WTC11 (cell line): ENCODE measurements at regions of chr19 and their contacts with region 1.

Region 1: GRCh38 chr19:45059278-45059965 is 16.9 kb downstream of the ZNF296 start:
- DNase-seq: peak; percentile 96
- ATAC-seq: peak; percentile 88
- H3K4me3 Mint-ChIP-seq: no peak overlapping the region
- H3K27ac Mint-ChIP-seq: peak overlapping the region; percentile 85; the same call in 1 of the 2 replicates
- H3K4me1 Mint-ChIP-seq: peaks cover 3% of the 10 kb centered on the region; the same call in 1 of the 2 replicates
- H3K27me3 Mint-ChIP-seq: no peaks in the 10 kb centered on the region
- CTCF ChIP-seq: peak; percentile 95

Region 2: GRCh38 chr19:44869733-44870470 is 189.5 kb before region 1 on chr19:
- CTCF ChIA-PET with region 1: no interaction called
- POLR2A ChIA-PET with region 1: no interaction called
- DNase-seq: no peak
- ATAC-seq: no peak
- H3K4me3 Mint-ChIP-seq: no peak overlapping the region
- H3K27ac Mint-ChIP-seq: peak overlapping the region; percentile 45; the same call in 1 of the 2 replicates
- H3K4me1 Mint-ChIP-seq: no peaks in the 10 kb centered on the region
- H3K27me3 Mint-ChIP-seq: no peaks in the 10 kb centered on the region
- CTCF ChIP-seq: no peak

Region 3: DNA sequence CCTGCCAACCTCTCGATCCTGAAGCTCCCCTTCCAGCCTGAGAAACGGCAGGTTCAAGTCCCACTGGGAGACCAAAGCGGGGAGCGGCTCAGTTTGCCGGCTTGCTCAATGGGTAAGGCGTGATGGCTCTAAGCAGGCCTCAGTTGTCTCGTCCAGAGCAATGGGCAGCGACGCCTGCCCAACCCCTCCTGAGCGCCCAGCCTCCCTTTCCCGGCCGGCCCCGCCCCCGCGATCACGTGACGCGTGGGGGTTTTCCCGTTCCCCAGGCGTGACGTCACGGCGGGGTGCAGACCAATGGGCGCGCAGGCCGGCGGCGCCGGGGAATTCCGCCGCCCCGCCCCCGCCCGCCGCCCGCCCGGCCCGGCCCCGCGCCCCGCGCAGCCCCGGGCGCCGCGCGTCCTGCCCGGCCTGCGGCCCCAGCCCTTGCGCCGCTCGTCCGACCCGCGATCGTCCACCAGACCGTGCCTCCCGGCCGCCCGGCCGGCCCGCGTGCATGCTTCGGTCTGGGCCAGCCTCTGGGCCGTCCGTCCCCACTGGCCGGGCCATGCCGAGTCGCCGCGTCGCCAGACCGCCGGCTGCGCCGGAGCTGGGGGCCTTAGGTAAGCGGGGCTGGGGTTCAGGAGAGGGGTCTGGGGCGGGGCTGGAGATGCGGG is 58.2 kb before region 1 on chr19 and contains the start of gene RELB:
- CTCF ChIA-PET with region 1: interaction called, 20 read pairs
- POLR2A ChIA-PET with region 1: no interaction called
- DNase-seq: peak; percentile 97
- ATAC-seq: peak; percentile 47
- H3K4me3 Mint-ChIP-seq: peak within 1 kb of the TSS; percentile 88
- H3K27ac Mint-ChIP-seq: peak within 1 kb of the TSS; percentile 97
- H3K4me1 Mint-ChIP-seq: peaks cover 6% of the 10 kb centered on the region; the same call in 1 of the 2 replicates
- H3K27me3 Mint-ChIP-seq: peaks cover 9% of the 10 kb centered on the region
- CTCF ChIP-seq: no peak
- total RNA-seq, gene RELB: 8.9 to 10.6 TPM (median 9.9 TPM) in 3 replicates

Region 4: GRCh38 chr19:45027371-45027770 is 32.1 kb before region 1 on chr19:
- CTCF ChIA-PET with region 1: interaction called, 18 read pairs
- POLR2A ChIA-PET with region 1: no interaction called
- DNase-seq: no peak
- ATAC-seq: peak; percentile 56
- H3K4me3 Mint-ChIP-seq: no peak overlapping the region
- H3K27ac Mint-ChIP-seq: no peak overlapping the region
- H3K4me1 Mint-ChIP-seq: no peaks in the 10 kb centered on the region
- H3K27me3 Mint-ChIP-seq: no peaks in the 10 kb centered on the region; the same call in 1 of the 2 replicates
- CTCF ChIP-seq: no peak

Region 5: DNA sequence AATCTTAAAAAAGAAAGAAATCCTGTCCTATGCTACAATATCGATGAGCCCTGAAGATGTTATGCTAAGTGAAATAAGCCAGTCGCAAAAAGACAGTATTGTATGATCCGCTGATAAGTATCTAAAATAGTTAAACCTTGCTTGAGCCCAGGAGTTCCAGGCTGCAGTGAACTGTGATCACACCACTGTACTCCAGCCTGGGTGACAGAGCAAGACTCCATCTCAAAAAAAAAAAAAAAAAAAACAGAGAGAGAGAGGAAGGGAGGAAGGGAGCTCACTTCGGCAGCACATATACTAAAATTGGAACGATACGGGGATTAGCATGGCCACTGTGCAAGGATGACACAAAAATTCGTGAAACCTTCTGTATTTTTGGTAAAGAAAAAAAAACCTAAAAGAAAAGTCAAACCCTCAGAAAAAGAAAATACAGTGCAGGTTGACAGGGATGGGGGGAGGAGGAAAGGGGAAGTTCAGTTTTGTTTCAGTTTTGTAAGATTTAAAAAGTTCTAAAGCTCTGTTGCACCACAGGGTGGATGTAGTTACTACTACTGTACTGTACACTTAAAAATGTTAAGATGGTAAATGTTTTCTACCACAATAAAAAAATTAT is 12.1 kb before region 1 on chr19:
- CTCF ChIA-PET with region 1: interaction called, 37 read pairs
- POLR2A ChIA-PET with region 1: no interaction called
- DNase-seq: no peak
- ATAC-seq: no peak
- H3K4me3 Mint-ChIP-seq: no peak overlapping the region
- H3K27ac Mint-ChIP-seq: 0 out of 2 replicates have a peak overlapping the region, but pooled peaks have one; percentile 39
- H3K4me1 Mint-ChIP-seq: no peaks in the 10 kb centered on the region
- H3K27me3 Mint-ChIP-seq: no peaks in the 10 kb centered on the region
- CTCF ChIP-seq: no peak

Region 6: GRCh38 chr19:45092747-45093678 is 33.6 kb after region 1 on chr19 and contains the start of gene PPP1R37:
- CTCF ChIA-PET with region 1: interaction called, 28 read pairs
- POLR2A ChIA-PET with region 1: interaction called, 17 read pairs
- DNase-seq: peak; percentile 93
- ATAC-seq: peak; percentile 52
- H3K4me3 Mint-ChIP-seq: peak within 1 kb of the TSS; percentile 84
- H3K27ac Mint-ChIP-seq: peak within 1 kb of the TSS; percentile 100
- H3K4me1 Mint-ChIP-seq: peaks cover 57% of the 10 kb centered on the region
- H3K27me3 Mint-ChIP-seq: no peaks in the 10 kb centered on the region
- CTCF ChIP-seq: no peak
- total RNA-seq, gene PPP1R37: 34.5 to 35.9 TPM (median 35.4 TPM) in 3 replicates

Region 7: DNA sequence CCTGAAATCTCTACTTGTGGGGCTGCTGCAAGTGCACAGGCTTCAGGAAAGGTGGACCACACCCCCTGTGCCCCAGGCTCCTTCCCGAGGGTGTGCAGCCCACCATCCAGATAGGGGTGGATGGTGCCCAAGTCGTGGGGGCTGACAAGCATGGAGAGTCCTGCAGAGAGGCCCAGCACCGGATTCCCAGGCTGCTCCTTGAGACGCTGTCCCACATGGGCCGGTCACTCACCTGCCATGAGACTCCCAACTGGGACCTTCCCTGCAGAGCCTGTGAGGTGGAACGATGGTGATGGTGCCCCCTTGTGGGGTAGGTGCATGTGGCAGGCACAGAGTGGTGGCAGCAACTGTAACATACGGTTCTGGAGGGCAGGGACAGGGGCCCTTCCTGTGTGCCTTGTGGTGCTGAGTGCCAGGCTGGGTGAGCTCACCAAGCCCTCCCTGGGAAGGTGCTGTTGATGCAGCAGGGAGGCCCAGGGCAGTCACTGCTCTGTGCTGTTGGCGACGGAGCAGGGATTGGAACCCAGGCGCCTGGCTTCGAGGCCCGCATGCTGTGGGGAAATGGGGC is 66.6 kb after region 1 on chr19:
- CTCF ChIA-PET with region 1: interaction called, 12 read pairs
- POLR2A ChIA-PET with region 1: no interaction called
- DNase-seq: peak; percentile 90
- ATAC-seq: peak; percentile 93
- H3K4me3 Mint-ChIP-seq: no peak overlapping the region
- H3K27ac Mint-ChIP-seq: peak overlapping the region; percentile 19; the same call in 1 of the 2 replicates
- H3K4me1 Mint-ChIP-seq: peaks cover 16% of the 10 kb centered on the region
- H3K27me3 Mint-ChIP-seq: no peaks in the 10 kb centered on the region
- CTCF ChIP-seq: peak; percentile 76